Activated T-helper 1 cell treated with anti-CD3 and anti-CD28 coated beads, Interleukin-12 subunit alpha, Interleukin-12 subunit beta, Interleukin-2, Interleukin-4 antibody, amounts not matched to agents 30 ng/mL and 10 ng/mL and 1 ng/mL, durations not matched to agents 14 hours and 24 hours and 36 hours (primary cell): ENCODE measurements at regions of chr7 and their contacts with region 1.

Region 1: DNA sequence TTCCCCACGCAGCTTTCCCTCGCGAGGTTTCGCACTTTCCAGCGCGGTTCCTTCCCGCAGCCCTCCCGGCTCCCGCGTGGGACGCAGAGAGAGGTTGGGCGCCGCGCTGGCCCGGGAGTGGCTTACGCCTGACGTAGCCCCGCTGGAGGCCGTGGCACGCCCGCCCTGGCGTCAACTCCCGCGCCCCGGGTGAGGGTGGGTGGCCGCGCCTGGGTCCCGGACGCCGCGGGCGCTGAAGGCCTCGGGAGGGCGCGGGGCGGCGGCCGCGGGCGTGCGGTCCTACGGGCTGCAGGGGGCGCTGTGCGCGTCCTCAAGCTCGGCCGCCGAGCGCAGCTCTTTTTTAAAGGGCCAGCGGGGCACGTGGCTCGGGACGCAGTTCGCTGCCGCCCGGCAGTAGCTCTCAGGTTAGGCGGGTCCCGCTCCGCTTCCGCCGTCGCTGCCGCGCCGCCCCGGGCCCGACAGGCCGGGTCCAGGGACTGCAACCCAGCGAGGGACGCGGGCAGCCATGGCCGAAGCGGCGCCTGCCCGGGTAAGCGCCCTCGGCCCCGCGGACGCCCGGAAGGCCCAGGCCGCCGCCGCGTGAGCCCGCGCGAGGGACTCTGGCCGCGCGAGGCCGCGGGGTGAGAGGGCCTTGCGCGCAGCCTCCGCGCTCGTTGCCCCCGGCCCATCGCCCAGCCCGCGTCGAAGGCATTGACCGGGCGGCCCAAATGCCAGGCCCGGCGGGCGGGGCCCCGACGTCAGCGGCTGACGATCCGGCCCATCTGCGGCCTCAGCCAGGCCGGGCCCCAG is at the start of gene ZNF783:
- DNase-seq: peak; percentile 81
- H3K4me3 Mint-ChIP-seq: peak within 1 kb of the TSS; percentile 88
- H3K27ac Mint-ChIP-seq: peak within 1 kb of the TSS; percentile 95
- H3K4me1 Mint-ChIP-seq: peaks cover 29% of the 10 kb centered on the region
- H3K27me3 Mint-ChIP-seq: no peaks in the 10 kb centered on the region
- total RNA-seq, gene ZNF783: 24.1 and 25.6 TPM in 2 replicates

Region 2: DNA sequence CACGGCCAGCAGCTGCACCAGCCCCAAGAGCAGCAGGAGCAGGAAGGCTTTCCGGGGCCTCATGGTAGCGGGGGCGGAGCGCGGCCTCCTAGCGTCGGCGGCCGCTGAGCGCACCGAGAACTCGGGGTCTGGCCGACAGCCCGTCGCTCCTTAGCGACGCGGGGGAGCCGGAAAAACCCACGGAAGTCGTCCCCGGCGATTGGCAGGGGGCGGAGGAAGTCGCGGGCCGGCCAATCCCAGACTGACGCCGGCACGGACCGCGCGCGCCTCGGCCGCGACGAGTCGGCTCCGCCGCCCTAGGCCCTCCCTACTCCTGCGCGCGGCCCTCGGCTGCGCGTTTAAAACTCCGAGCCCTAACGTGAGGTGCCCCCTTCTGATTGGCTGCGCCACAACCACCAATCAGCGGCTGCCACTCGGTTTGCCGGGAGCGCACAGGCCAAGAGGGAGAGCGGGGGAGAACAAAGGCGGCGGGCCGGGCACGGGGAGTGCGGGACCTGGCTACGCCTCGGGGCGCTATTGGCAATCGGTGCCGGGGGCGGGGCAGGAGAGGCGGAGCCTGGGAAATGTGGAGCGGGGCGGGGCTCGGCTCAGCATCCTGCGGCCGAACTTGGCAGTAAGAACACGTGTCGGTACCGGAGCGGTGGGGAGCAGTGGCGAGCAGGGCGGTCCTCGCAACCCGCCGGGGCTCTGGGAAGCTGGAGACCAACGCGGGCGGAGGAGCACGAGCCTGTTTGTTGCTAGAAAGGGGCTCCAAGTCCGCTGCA is 233.5 kb before region 1 on chr7 and contains the start of gene PDIA4:
- intact Hi-C with region 1: loop called (anchors 1 kb)
- DNase-seq: peak; percentile 100
- H3K4me3 Mint-ChIP-seq: peak within 1 kb of the TSS; percentile 98
- H3K27ac Mint-ChIP-seq: peak within 1 kb of the TSS; percentile 93
- H3K4me1 Mint-ChIP-seq: peaks cover 34% of the 10 kb centered on the region
- H3K27me3 Mint-ChIP-seq: peaks cover 2% of the 10 kb centered on the region
- total RNA-seq, gene PDIA4: 132 and 142 TPM in 2 replicates

Region 3: GRCh38 chr7:149125863-149126661 is 136.0 kb before region 1 on chr7 and contains the start of gene ZNF425:
- intact Hi-C with region 1: loop called (anchors 1 kb)
- DNase-seq: peak; percentile 93
- H3K4me3 Mint-ChIP-seq: peak within 1 kb of the TSS; percentile 100
- H3K27ac Mint-ChIP-seq: peak within 1 kb of the TSS; percentile 100
- H3K4me1 Mint-ChIP-seq: peaks cover 28% of the 10 kb centered on the region
- H3K27me3 Mint-ChIP-seq: no peaks in the 10 kb centered on the region
- total RNA-seq, gene ZNF425: 1.1 and 1.2 TPM in 2 replicates

Region 4: DNA sequence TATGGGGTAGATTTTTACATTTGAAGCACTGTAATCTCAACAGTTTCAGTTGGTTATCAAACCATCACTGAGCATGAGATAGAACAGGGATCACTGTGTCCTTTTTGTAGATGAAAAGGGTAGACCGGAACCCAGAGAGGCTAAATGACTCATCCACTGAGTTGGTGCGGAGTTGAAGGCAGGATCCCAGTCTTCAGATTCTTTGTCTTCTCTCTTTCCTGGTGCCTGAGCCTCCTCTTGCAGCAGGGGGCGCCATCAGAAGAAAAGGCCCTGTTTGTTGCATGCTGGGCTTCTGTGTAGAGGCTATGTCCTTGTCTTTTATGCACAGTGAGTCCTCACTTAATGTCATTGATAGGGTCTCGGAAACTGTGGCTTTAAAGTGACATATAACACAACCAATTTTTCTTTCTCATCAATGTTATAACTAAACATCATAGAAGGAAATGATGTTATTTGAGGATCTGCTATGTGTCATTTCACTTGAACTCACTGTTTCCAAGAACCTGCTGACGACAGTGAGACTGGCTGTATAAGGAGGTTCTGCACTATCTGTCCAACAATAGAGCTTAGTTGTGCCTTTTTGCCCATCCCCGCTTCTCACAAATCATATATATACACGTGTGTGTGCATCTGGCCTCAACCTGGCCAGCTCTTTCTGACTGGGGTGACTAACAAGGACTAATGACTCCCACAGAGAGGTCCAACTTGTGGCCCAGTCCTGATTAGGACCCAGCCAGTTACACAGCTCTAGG is 52.3 kb before region 1 on chr7:
- intact Hi-C with region 1: loop called (anchors 1 kb)
- DNase-seq: peak; percentile 65
- H3K4me3 Mint-ChIP-seq: peak overlapping the region; percentile 37
- H3K27ac Mint-ChIP-seq: peak overlapping the region; percentile 87
- H3K4me1 Mint-ChIP-seq: peaks cover 13% of the 10 kb centered on the region
- H3K27me3 Mint-ChIP-seq: no peaks in the 10 kb centered on the region

Region 5: DNA sequence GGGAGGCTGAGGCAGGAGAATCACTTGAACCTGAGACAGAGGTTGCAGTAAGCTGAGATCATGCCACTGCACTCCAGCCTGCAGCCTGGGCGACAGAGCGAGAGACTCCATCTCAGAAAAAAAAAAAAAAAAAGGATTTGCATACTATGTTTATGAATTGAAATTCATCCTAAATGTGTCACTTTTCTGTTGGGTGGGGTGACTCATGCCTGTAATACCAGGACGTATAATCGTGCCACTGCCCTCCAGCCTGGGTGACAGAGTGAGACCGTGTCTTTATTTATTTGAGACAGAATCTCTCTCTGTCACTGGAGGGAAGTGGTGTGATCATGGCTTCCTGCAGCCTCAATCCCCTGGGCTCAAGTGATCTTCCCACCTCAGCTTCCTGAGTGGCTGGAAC is 16.8 kb before region 1 on chr7:
- intact Hi-C with region 1: loop called (anchors 1 kb)
- DNase-seq: no peak
- H3K4me3 Mint-ChIP-seq: no peak overlapping the region
- H3K27ac Mint-ChIP-seq: peak overlapping the region; percentile 80
- H3K4me1 Mint-ChIP-seq: peaks cover 47% of the 10 kb centered on the region
- H3K27me3 Mint-ChIP-seq: no peaks in the 10 kb centered on the region

Region 6: DNA sequence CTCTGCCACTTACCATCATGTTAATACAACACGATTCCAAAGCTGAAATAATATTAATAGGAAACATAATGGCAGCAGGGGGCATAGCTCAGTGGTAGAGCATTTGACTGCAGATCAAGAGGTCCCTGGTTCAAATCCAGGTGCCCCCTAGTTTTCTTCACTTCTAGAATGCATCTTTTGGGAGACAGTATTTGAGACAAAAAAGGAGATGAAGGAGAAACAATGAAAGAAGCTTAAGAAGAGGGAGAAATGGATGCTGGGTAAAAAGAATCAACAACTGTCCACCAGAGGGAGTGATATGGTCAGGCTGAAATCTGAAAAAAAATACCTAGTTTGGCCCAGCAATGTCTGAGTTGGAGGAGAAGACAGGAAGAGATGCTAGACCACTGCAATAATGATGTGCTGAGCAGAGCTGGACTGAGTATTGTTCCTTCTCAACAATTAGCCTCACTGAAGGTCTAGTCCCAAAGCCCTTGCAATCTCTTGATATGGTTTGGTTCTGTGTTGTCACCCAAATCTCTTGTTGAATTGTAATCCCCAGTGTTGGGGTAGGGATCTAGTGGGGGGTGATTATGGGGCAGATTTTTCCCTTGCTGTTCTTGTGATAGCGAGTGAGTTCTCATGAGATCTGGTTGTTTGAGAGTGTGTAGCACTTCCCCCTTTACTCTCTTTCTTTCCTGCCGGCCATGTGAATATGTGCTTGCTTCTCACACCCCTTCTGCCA is 48.3 kb after region 1 on chr7:
- intact Hi-C with region 1: loop called (anchors 1 kb)
- DNase-seq: no peak
- H3K4me3 Mint-ChIP-seq: no peak overlapping the region
- H3K27ac Mint-ChIP-seq: no peak overlapping the region
- H3K4me1 Mint-ChIP-seq: no peaks in the 10 kb centered on the region
- H3K27me3 Mint-ChIP-seq: peaks cover 13% of the 10 kb centered on the region

Region 7: DNA sequence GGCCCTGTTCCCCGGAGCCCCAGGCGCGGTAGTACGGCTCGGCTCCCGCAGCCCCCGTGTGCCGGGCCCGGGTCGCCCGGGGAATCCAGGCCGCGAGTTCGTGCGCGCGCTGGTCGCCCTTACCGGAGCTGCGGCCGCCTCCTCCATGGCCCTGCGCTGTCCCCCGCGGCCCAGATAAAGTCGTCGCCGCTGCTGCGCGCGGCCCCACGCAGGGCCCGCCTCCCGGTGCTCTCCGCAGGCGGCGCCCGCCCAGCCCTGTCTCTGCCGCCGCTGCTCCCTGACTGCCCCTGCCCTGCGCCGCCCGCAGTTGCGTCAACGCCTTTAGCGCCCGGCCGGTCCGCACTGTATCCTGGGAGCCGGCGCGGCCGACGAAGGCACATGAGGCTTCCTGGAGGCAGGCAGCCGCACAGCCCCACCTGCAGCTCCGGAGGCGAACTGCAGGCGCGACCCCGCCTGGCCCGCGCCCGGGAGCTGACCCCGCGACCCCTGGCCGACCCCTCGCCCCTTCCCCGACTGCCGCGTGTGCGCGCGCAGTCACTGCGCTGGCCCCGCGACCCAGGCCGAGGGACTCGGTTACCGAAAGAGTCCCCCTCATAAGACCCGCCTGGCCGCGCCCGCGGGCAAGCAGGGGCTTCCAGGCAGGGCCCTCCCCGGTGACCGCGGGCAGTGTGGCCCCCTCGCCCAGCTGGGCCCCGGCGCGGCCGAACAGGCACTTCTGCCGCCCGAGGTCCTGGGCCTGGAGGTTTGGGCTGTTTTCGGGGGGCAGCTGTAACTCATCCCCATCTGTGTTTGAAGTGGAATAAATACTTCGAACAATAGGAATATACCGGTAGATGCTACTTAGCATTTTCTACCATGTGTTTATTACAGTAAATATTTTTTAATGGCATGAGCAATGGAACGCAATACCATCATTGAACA is 362.7 kb after region 1 on chr7:
- intact Hi-C with region 1: loop called (anchors 1 kb)
- DNase-seq: peak; percentile 91
- H3K4me3 Mint-ChIP-seq: peak overlapping the region; percentile 89
- H3K27ac Mint-ChIP-seq: peak overlapping the region; percentile 83
- H3K4me1 Mint-ChIP-seq: peaks cover 32% of the 10 kb centered on the region
- H3K27me3 Mint-ChIP-seq: peaks cover 6% of the 10 kb centered on the region